ENCODE measurements at regions of chr9 and their contacts with region 1.

Region 1: DNA sequence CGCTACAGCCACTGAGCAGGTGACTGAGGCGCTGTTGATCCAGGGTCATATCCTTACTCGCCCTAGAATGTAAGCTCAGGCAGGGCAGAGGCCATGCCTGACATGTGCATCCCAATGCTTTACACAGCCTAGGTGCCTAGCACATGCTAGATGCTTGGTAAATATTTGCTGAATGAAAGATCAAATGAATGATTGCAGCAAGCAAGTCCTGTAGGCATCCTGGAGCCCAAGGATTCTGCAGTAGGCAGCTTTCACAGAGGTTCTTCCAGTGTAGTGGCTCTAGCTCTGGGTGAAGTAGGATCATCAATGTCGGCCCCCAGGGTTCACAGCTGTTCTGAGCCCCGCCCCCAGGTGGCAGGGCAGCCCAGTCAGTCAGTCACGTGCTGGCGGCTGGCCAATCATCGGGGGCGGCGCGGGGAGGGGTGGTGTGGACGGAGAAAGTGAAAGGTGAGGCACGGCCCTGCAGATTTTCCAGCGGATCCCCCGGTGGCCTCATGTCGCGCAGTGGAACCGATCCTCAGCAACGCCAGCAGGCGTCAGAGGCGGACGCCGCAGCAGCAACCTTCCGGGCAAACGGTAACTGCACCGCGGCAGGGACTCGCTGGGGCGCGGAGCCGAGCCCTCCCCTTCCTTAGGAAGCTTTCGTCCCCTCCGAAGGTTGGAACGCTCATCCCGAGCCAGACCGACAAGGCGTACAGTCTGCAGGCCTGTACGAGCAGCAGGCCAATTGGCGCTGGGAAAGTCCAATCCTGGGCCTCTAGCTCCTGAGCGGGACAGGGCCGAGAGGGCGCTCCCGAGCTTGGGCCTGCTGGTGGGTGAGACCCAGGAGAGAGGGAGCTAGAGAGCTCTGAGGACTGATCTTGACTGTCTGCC is at the start of gene GALT:
- DNase-seq: peak; percentile 42
- H3K4me3 ChIP-seq: peak within 1 kb of the TSS; percentile 89
- CTCF ChIP-seq: peak; percentile 89

Region 2: DNA sequence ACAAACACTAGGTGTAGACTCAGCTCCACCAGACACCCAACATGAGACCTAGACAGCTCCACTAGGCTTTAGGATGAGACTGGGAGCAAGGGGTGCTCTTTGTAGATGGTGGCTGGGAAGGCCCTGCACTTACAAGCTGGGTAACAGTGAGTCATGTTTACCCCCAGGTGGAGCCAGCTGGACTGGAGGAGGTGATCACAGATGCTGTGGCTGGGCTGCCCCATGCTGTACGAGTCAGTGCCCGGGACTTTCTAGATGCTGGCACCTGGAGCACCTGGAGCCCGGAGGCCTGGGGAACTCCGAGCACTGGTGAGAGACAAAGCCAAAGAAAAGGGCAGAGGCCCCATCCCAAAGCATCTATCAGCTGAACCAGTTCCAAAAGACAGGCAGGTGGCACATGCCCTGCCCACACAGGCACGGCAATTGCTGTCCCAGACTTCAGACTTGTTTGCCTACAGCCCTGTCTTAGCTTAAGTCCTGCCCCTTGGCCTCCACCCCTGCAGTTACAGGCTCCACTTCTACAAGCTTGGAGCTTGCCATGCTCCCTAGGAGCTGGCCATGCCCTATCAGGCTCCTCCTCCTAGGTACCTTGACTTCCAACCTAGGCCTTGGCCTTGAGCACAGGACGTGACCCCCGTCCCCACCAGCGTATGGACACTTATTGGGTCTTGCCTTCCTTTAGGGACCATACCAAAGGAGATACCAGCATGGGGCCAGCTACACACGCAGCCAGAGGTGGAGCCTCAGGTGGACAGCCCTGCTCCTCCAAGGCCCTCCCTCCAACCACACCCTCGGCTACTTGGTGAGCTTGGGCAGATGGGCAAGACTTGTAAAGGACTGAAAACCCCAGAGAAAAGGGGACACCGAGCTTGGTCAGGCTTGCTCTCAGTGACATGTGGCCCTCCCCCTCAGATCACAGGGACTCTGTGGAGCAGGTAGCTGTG is 13.4 kb after region 1 on chr9:
- CTCF ChIA-PET with region 1: interaction called, 153 read pairs
- POLR2A ChIA-PET with region 1: interaction called, 8 read pairs
- DNase-seq: no peak
- H3K4me3 ChIP-seq: no peak overlapping the region
- CTCF ChIP-seq: no peak

Region 3: GRCh38 chr9:34665381-34666250 is 19.2 kb after region 1 on chr9:
- CTCF ChIA-PET with region 1: interaction called, 153 read pairs
- POLR2A ChIA-PET with region 1: interaction called, 8 read pairs
- DNase-seq: peak; percentile 65
- H3K4me3 ChIP-seq: peak overlapping the region; percentile 92
- CTCF ChIP-seq: no peak

Measured in AG04449 (cell line).